IMR-90 (cell line): ENCODE measurements at regions of chr19 and their contacts with region 1.

Region 1: DNA sequence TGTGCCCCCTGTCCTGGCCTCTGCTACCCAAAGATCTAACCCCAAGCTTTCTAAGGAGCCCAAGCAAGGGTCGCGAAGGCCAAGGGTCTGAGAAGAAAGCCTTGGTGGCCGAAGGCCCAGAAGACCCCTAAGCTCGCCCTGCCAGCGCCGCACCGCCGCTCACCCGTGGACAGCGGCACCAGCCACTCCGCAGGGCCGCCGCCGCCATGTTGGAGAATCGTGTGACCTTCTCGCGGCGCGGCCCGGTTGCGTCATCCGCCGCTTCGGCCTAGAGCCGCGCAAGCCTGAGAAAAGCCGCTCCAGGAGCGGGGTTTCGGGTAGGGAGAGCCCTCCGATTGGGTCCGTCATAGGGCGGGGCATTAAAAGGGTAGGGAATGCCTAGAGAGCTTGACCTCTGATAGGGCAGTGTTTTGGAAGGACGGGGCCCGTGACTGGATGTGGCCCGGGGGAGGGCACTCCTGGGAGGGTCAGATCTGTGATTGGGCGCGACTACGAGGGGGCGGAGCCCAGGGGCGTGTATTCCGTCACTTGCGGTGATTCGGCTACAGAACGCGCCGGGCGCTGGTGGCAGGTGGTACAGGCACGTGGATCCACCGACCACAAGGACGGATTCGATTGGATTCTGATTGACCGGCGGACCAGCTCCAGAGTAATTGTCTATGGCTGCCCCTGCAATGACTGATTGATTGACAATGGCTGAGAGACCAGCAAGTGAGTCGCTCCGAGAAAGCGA is at the start of gene TIMM44:
- DNase-seq: peak; percentile 99
- ATAC-seq: peak; percentile 99
- H3K4me3 ChIP-seq: peak within 1 kb of the TSS; percentile 61
- H3K27ac ChIP-seq: peak within 1 kb of the TSS; percentile 80
- H3K4me1 ChIP-seq: no peaks in the 10 kb centered on the region
- H3K27me3 ChIP-seq: no peaks in the 10 kb centered on the region
- CTCF ChIP-seq: no peak
- POLR2A ChIP-seq: peak; percentile 91
- RAD21 ChIP-seq: no peak
- total RNA-seq, gene TIMM44: 37.6 and 43.0 TPM in 2 replicates

Region 2: DNA sequence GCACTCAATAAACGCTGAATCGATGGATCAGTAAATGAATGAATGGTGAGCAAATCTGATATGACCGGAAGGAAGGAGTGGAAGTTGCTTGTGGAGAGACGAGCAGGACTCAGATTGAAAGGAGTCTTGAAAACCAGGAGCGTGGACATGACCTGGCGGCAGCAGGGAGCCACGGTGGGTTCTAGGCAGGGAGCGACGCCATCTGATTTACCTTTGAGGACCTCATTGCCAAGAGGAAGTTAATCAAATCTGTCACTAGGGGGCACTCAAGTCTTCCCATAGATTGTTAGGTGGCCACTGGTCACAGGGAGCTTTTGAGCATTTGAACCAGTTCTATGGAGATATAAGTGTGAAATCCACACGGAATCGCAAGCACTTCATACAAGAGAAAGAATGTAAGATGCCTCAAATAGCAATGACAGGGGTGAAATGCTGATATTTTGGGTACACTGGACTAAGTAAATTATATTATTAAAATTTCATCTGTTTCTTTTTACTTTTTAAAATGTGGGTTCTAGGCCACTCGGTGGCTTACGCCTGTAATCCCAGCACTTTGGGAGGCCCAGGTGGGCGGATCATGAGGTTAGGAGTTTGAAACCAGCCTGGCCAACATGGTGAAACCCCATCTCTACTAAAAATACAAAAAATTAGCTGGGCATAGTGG is 214.9 kb after region 1 on chr19:
- CTCF ChIA-PET with region 1: no interaction called
- POLR2A ChIA-PET with region 1: no interaction called
- dilution Hi-C with region 1: no loop called
- in situ Hi-C with region 1: no loop called
- intact Hi-C with region 1: loop called (anchors 1 kb)
- DNase-seq: peak; percentile 79
- ATAC-seq: peak; percentile 60
- H3K4me3 ChIP-seq: no peak overlapping the region
- H3K27ac ChIP-seq: no peak overlapping the region
- H3K4me1 ChIP-seq: peaks cover 5% of the 10 kb centered on the region
- H3K27me3 ChIP-seq: no peaks in the 10 kb centered on the region
- CTCF ChIP-seq: peak; percentile 78
- POLR2A ChIP-seq: no peak
- RAD21 ChIP-seq: peak; percentile 78